ENCODE measurements at regions of chr12 and their contacts with region 1.

Region 1: GRCh38 chr12:97797473-97797872 is 334.9 kb downstream of the RMST start:
- DNase-seq: no peak
- H3K4me3 ChIP-seq: no peak overlapping the region
- H3K27ac ChIP-seq: no peak overlapping the region
- H3K4me1 ChIP-seq: no peaks in the 10 kb centered on the region
- H3K27me3 ChIP-seq: no peaks in the 10 kb centered on the region
- CTCF ChIP-seq: no peak

Region 2: DNA sequence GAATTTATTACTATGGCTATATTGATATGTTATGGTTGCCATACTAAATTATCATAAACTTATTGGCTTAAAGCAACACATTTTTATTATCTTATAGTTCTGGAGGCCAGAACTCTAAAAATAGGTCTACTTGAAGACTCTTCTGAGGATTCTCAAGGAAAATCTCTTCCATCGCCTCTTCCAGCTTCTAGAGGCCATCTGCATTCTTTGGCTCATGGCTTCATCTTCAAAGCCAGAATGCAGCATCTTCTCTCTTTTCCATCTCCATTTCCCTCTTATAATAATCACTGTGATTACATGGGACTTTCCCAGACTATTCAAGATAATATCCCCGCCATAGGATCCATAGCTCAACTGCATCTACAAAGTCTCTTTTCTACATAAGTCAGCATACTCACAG is 50.6 kb after region 1 on chr12:
- dilution Hi-C with region 1: loop called (anchors 5 kb)
- DNase-seq: no peak
- H3K4me3 ChIP-seq: no peak overlapping the region
- H3K27ac ChIP-seq: no peak overlapping the region
- H3K4me1 ChIP-seq: no peaks in the 10 kb centered on the region
- H3K27me3 ChIP-seq: no peaks in the 10 kb centered on the region
- CTCF ChIP-seq: no peak

Measured in keratinocyte (primary cell).